ENCODE measurements at regions of chr1 and their contacts with region 1.

Region 1: GRCh38 chr1:197017558-197018146 is 40.3 kb downstream of the CFHR5 start:
- DNase-seq: no peak
- H3K27ac ChIP-seq: no peak overlapping the region
- CTCF ChIP-seq: no peak

Region 2: DNA sequence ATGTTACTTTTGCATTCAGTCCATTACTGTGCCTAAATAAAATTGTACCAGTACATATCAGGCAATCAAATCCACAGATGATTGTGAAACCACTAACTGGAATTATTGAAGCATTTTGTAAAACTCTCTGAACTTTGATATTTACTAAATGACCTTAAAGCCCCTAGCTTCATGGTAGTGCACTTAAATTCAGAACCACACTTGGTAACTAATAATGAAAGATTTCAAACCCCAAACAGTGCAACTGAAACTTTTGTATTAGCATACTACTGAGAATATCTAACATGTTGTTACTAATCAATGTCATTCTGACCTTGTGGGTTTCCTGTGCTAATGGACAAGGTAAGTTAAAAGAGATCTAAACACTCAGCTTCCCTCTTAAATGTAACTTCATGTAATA is 243.0 kb before region 1 on chr1 and contains the start of gene CFHR3:
- CTCF ChIA-PET with region 1: interaction called, 12 read pairs
- POLR2A ChIA-PET with region 1: no interaction called
- DNase-seq: no peak
- H3K27ac ChIP-seq: no peak within 1 kb of the TSS
- CTCF ChIP-seq: no peak

Region 3: DNA sequence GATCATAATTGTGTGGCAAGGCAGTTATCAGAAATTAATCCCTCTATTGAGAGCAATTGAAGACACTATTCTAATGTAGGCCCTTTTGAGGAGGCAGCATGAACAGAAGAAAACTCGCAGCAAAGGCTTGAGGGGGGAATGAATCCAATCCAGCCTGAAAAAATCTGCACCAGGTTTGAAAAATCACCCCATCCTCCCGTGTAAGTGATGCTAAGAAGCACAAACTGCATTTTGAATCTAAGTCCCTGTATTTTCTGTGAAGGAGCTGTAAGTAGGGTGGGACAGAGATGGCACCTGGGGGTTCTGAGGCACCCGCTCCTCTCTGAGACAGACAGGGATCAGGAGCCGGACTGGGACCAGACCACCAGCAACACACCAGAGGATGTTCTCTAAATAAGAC is 250.4 kb after region 1 on chr1 and contains the start of gene CRB1:
- CTCF ChIA-PET with region 1: no interaction called
- POLR2A ChIA-PET with region 1: no interaction called
- DNase-seq: no peak
- H3K27ac ChIP-seq: no peak within 1 kb of the TSS
- CTCF ChIP-seq: no peak

Region 4: GRCh38 chr1:197471248-197471985 is 453.8 kb after region 1 on chr1:
- CTCF ChIA-PET with region 1: no interaction called
- POLR2A ChIA-PET with region 1: no interaction called
- DNase-seq: no peak
- H3K27ac ChIP-seq: no peak overlapping the region
- CTCF ChIP-seq: no peak